ENCODE measurements at regions of chr5 and their contacts with region 1.

Region 1: GRCh38 chr5:152532714-152533113 is 127.6 kb upstream of the NMUR2 start:
- DNase-seq: peak; percentile 45
- H3K4me3 ChIP-seq: no peak overlapping the region
- H3K27ac ChIP-seq: no peak overlapping the region
- H3K4me1 ChIP-seq: no peaks in the 10 kb centered on the region
- H3K27me3 ChIP-seq: no peaks in the 10 kb centered on the region
- CTCF ChIP-seq: peak; percentile 35 to 53

Region 2: DNA sequence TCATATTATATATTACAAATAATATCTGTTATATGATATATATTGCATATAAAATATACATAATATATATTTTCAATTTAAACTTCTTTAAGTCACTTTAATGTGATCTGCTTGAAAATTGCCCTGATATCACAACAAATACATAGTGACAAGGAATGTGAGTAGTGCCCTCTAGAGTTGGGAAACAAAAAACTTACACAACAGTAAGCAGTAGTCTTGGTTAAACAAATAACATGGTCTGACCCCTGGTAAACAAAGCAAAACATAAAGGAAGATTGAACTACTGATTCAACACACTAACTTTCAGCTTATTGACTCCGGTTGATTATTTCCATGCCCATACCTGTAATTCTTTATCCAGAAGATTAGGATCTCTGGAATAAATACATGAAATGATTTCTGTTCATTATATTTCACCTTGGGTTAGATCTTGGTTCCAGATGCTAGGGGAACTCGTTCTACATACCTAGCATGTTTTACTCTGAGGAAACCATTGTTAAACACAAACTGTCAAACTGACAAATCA is 60.8 kb after region 1 on chr5:
- CTCF ChIA-PET with region 1: no interaction called
- dilution Hi-C with region 1: no loop called
- in situ Hi-C with region 1: no loop called
- intact Hi-C with region 1: loop called (anchors 2 kb)
- DNase-seq: no peak
- H3K4me3 ChIP-seq: no peak overlapping the region
- H3K27ac ChIP-seq: no peak overlapping the region
- H3K4me1 ChIP-seq: no peaks in the 10 kb centered on the region
- H3K27me3 ChIP-seq: no peaks in the 10 kb centered on the region
- CTCF ChIP-seq: peak in 1 of 2 donors; percentile 47

Region 3: DNA sequence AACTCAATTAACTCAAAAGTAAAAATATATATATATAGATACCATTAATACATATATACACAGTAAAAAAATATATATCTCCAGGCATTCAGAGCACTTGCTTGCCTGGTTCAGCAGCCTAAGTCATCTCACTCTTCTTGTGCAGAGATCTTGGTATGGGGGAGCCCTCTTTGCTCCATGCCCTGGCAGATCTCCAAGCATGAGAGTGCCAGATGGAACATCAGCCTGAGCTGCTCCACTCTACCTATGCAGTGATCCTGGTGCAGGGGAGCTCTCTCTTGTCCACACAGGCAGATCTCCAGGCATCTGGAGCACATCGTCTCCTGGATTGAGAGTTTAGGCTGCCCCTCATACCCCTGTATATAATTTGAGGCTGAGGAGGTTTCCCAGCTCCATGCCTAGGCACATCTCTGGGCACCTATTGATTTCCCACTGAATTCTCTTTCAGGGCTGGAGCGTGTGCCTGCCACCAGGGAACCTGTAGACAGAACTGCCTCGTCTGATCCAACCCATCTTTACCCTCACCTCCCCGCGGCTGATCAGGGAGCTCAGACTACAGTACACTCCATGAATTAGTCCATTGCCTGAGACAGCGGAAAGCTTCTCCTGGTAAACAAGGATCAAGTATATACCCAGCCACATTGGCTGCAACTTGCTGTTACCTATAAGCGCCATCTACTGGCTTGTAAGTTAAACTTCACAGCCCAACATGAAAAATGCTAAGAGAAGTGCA is 615.3 kb after region 1 on chr5:
- CTCF ChIA-PET with region 1: no interaction called
- dilution Hi-C with region 1: no loop called
- in situ Hi-C with region 1: no loop called
- intact Hi-C with region 1: loop called (anchors 10 kb)
- DNase-seq: peak; percentile 78
- H3K4me3 ChIP-seq: no peak overlapping the region
- H3K27ac ChIP-seq: no peak overlapping the region
- H3K4me1 ChIP-seq: peaks cover 6% of the 10 kb centered on the region
- H3K27me3 ChIP-seq: no peaks in the 10 kb centered on the region
- CTCF ChIP-seq: peak; percentile 54 to 85

Region 4: GRCh38 chr5:153425914-153426313 is 893.2 kb after region 1 on chr5:
- CTCF ChIA-PET with region 1: no interaction called
- dilution Hi-C with region 1: no loop called
- in situ Hi-C with region 1: no loop called
- intact Hi-C with region 1: loop called (anchors 10 kb)
- DNase-seq: peak; percentile 11
- H3K4me3 ChIP-seq: no peak overlapping the region
- H3K27ac ChIP-seq: no peak overlapping the region
- H3K4me1 ChIP-seq: no peaks in the 10 kb centered on the region
- H3K27me3 ChIP-seq: peaks cover 2% of the 10 kb centered on the region
- CTCF ChIP-seq: peak; percentile 79 to 81